ENCODE measurements at regions of chr7 and their contacts with region 1.

Region 1: DNA sequence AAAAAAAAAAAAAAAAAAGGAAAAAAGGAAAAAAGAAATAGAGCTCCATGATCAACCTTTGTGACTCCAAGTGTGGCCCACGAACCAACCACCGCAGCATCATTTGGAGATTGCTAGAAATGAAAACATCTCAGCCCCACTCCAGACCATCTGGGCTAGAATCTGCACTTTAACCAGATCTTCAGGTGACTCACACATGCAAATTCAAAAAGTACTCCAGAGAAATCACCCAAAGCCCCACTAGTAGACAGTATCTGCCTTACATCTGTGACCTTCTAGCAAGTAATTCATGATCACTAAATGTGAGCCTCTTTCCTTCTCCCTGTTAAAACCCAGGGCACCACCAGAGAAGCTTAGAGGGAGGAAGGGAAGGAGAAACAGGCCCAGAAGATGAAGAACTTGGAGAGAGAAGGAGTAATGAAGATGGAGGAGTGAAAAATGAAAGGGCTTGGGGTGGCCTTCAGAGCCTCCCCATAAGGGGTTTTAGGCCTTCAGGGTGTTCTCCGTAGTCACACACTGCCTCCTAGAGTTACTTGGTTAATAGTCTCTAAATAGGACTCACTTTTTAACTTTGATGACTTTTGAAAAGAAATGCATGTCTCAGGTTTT is 94.0 kb downstream of the SLC37A3 start:
- DNase-seq: peak; percentile 35
- H3K4me3 Mint-ChIP-seq: no peak overlapping the region
- H3K27ac Mint-ChIP-seq: peak overlapping the region; percentile 82
- H3K4me1 Mint-ChIP-seq: peaks cover 7% of the 10 kb centered on the region
- H3K27me3 Mint-ChIP-seq: no peaks in the 10 kb centered on the region

Region 2: DNA sequence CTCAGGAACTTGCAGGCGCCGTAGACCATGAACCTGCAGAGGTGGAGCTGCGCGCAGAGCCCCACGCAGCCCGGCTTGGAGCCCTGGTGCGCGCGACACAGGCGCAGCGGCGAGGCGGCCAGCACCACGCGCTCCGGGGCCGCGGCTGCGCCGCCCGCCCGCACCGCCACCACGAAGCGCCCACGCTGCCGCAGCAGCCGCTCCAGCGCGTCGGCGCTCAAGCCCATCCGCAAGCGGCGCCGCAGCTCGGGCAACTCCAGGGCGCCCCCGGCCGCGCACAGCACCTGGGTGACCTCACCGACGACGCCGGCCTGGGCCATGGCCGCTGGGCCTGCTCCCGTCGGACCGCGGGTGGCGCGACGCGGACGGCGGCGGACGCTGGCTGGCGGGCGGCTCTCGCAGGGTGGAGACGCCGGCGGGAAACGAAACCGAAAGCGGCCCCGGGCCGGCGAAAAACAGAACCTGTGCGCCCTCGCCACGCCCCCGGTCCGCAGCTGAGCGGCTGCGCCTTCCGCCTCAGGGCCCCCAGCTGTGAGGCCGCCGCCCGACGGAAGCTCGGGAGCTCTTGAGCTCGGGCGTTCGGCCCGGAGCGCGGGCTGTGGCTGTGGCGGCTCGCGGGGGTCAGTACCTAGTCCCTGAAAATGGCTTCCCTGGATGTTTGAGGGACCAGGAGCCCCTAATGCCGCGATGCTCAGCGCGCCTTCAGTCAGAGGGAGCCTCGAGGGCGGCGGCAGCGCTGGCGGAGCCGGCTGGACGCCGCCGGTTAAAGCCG is 241.6 kb before region 1 on chr7 and contains the start of gene PARP12:
- intact Hi-C with region 1: loop called (anchors 10 kb)
- DNase-seq: peak; percentile 88
- H3K4me3 Mint-ChIP-seq: peak within 1 kb of the TSS; percentile 81
- H3K27ac Mint-ChIP-seq: peak within 1 kb of the TSS; percentile 71
- H3K4me1 Mint-ChIP-seq: peaks cover 39% of the 10 kb centered on the region
- H3K27me3 Mint-ChIP-seq: peaks cover 4% of the 10 kb centered on the region
- total RNA-seq, gene PARP12: 23.6 and 24.6 TPM in 2 replicates

Region 3: GRCh38 chr7:140342727-140343514 is 38.6 kb after region 1 on chr7:
- intact Hi-C with region 1: no loop called
- DNase-seq: no peak
- H3K4me3 Mint-ChIP-seq: no peak overlapping the region
- H3K27ac Mint-ChIP-seq: peak overlapping the region; percentile 3
- H3K4me1 Mint-ChIP-seq: peaks cover 10% of the 10 kb centered on the region
- H3K27me3 Mint-ChIP-seq: no peaks in the 10 kb centered on the region

Measured in activated T-helper 2 cell treated with anti-CD3 and anti-CD28 coated beads, Interferon-gamma antibody, Interleukin-2, Interleukin-4, amounts not matched to agents 10 μg/mL and 5 μg/mL and 100 μg/mL, durations not matched to agents 14 hours and 24 hours and 36 hours (primary cell).